ENCODE measurements at regions of chr17 and their contacts with region 1.

Region 1: GRCh38 chr17:55601874-55602364 is 90.7 kb upstream of the SMIM36 start:
- DNase-seq: no peak
- H3K4me3 ChIP-seq: no peak overlapping the region
- H3K27ac ChIP-seq: no peak overlapping the region
- H3K4me1 ChIP-seq: peaks cover 0 to 4% (median 0%) of the 10 kb centered on the region in 4 donors
- H3K27me3 ChIP-seq: no peaks in the 10 kb centered on the region
- CTCF ChIP-seq: peak; percentile 47 to 64 (median 56)
- EP300 ChIP-seq: no peak
- POLR2A ChIP-seq: no peak

Region 2: GRCh38 chr17:55533608-55534007 is 68.3 kb before region 1 on chr17:
- in situ Hi-C with region 1: no loop called
- intact Hi-C with region 1: loop called (anchors 5 kb)
- DNase-seq: no peak
- H3K4me3 ChIP-seq: no peak overlapping the region
- H3K27ac ChIP-seq: no peak overlapping the region
- H3K4me1 ChIP-seq: no peaks in the 10 kb centered on the region
- H3K27me3 ChIP-seq: no peaks in the 10 kb centered on the region
- CTCF ChIP-seq: no peak
- EP300 ChIP-seq: no peak
- POLR2A ChIP-seq: no peak

Measured in transverse colon (tissue), 4 donors.